Panc1 (cell line): ENCODE measurements at regions of chr4 and their contacts with region 1.

Region 1: DNA sequence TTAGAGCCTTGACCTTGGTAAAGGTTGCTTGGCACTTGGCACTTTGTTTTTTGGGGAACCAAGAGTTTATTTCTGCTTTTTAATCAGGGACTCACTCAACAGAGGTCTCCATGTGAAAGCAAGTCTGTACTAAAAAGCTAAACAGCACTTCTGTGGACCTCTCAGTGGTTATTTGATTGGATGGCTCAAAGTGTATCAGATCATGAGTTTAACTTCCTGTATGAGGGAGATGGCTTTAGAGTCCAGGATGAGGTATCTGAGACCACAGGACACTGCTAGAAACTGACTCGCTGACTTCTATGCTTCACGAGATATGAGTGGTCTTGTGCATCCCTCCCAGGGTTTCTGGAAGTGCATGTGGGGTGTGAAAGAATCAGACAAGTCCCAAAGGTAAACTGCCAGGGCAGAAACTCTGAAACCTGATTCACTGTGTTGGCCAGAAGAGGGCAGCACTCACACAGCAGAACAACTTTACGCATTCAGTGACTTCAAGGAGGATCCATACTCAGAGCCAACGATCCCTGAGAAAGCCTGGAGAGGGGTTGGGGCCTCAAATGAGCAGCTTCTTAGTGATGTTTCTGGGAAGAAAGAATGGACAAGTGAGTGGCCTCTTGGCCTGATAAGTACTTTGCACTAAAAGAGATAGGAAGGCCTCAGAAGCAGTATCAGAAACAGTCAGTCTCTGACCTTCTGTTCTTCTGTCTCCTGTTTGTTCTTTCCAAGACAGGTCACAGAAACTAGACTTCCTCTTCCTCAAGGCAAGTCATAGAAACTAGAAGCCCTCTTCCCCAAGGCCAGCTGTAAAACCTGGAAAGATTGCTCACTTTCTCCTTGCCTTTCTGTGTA is 220.3 kb upstream of the CXCL13 start:
- DNase-seq: peak; percentile 52
- ATAC-seq: peak; percentile 82
- H3K4me3 ChIP-seq: no peak overlapping the region
- H3K27ac ChIP-seq: no peak overlapping the region
- H3K4me1 ChIP-seq: no peaks in the 10 kb centered on the region
- H3K27me3 ChIP-seq: no peaks in the 10 kb centered on the region
- CTCF ChIP-seq: peak; percentile 77

Region 2: DNA sequence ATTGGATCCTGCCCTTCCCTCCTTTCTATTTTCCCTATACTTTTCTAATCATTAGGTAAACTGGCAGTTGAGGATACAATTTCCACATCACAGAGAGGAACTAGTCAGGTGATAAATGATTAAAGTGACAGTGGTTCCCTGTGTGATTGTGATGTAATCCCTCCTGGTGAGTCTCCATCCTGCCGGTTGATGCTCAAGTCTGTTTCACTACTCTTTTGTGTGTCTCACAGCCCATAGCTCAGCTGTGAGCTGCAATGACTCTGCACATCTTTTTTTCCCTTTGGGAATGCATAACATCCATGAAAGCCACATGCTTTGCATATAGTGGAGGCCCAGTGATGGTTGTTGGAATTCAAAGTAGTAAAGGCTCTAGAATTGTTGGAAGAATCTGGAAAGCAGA is 370.0 kb before region 1 on chr4:
- CTCF ChIA-PET with region 1: no interaction called
- POLR2A ChIA-PET with region 1: no interaction called
- in situ Hi-C with region 1: no loop called
- intact Hi-C with region 1: no loop called
- DNase-seq: no peak
- ATAC-seq: no peak
- H3K4me3 ChIP-seq: no peak overlapping the region
- H3K27ac ChIP-seq: no peak overlapping the region
- H3K4me1 ChIP-seq: no peaks in the 10 kb centered on the region
- H3K27me3 ChIP-seq: no peaks in the 10 kb centered on the region
- CTCF ChIP-seq: no peak

Region 3: GRCh38 chr4:77434299-77435092 is 49.1 kb after region 1 on chr4:
- CTCF ChIA-PET with region 1: no interaction called
- POLR2A ChIA-PET with region 1: no interaction called
- in situ Hi-C with region 1: no loop called
- intact Hi-C with region 1: loop called (anchors 2 kb)
- DNase-seq: no peak
- ATAC-seq: no peak
- H3K4me3 ChIP-seq: no peak overlapping the region
- H3K27ac ChIP-seq: no peak overlapping the region
- H3K4me1 ChIP-seq: no peaks in the 10 kb centered on the region
- H3K27me3 ChIP-seq: no peaks in the 10 kb centered on the region
- CTCF ChIP-seq: no peak

Region 4: DNA sequence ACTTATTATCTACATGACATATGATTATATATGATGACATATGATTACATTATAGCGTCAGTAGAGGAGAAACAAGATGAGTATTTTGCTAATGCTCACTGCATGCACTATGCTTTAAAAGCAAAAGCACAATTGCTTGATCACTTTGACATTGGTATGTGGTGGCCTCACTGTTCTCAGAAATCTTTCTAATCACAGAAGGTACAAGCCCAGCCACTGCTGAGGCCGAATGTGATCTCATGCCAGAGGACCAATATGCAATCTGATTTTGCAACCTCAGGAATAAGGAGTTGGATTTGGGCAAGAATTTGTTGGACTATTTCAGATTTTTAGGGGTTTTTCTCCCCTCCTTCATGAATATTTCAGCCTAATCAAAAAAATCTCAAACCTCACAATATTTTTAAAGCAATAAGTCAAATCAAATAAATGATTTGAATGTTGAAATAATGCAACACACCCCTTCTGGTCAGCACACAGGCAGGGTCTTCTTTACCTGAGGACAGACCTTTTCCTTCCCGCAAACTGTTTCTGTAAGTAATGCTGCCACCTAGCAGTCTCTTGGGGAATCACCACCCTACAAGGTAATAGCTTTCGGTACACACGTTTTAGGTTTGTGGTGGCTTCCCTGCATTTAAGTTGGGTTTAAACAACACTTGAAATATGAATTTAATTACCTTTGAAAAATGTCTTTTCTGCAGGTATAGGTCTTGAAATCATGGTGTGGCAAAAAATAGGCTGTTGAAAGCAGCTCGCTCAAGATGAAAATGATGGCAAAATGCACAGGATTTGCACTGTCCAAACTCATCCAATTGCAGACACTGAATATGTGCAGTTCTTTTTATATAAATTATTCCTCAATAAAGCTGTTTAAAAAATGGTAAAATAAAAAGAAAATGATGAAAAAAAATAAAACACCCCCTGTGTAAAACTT is 215.4 kb after region 1 on chr4:
- CTCF ChIA-PET with region 1: no interaction called
- POLR2A ChIA-PET with region 1: no interaction called
- in situ Hi-C with region 1: no loop called
- intact Hi-C with region 1: loop called (anchors 5 kb)
- DNase-seq: no peak
- ATAC-seq: 0 out of 2 replicates have a peak, but pooled peaks have one; percentile 60
- H3K4me3 ChIP-seq: no peak overlapping the region
- H3K27ac ChIP-seq: no peak overlapping the region
- H3K4me1 ChIP-seq: no peaks in the 10 kb centered on the region
- H3K27me3 ChIP-seq: no peaks in the 10 kb centered on the region
- CTCF ChIP-seq: peak; percentile 81

Region 5: GRCh38 chr4:77618383-77619122 is 233.2 kb after region 1 on chr4:
- CTCF ChIA-PET with region 1: interaction called, 4 read pairs
- POLR2A ChIA-PET with region 1: no interaction called
- in situ Hi-C with region 1: no loop called
- intact Hi-C with region 1: loop called (anchors 5 kb)
- DNase-seq: peak; percentile 43
- ATAC-seq: peak; percentile 94
- H3K4me3 ChIP-seq: no peak overlapping the region
- H3K27ac ChIP-seq: no peak overlapping the region
- H3K4me1 ChIP-seq: no peaks in the 10 kb centered on the region
- H3K27me3 ChIP-seq: no peaks in the 10 kb centered on the region
- CTCF ChIP-seq: peak; percentile 82

Region 6: DNA sequence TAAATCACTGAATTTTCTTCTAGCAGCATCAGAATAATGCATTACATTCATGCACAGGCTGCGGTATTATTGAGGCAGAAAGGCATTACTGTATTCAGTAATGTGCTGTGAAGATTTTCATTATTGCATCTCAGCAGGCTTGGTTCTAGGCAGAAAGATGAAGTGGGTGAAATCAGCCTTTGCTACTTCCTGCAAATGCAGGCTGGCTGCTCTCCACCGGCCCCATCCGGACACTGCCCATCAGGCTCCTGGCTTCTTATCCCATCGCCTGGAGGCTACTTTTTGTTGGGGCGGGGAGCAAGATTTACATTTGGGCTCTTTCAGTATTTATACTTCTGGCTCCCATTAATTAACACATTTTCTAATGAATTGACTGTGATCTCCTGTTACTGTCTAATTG is 789.5 kb after region 1 on chr4:
- CTCF ChIA-PET with region 1: no interaction called
- POLR2A ChIA-PET with region 1: no interaction called
- in situ Hi-C with region 1: no loop called
- intact Hi-C with region 1: no loop called
- DNase-seq: no peak
- ATAC-seq: no peak
- H3K4me3 ChIP-seq: no peak overlapping the region
- H3K27ac ChIP-seq: no peak overlapping the region
- H3K4me1 ChIP-seq: no peaks in the 10 kb centered on the region
- H3K27me3 ChIP-seq: no peaks in the 10 kb centered on the region
- CTCF ChIP-seq: no peak